ENCODE measurements at regions of chr16 and their contacts with region 1.

Region 1: GRCh38 chr16:30183233-30184095 is at the start of gene CORO1A:
- DNase-seq: peak; percentile 83 to 90
- ATAC-seq: peak; percentile 75 to 89 (median 82)
- H3K4me3 ChIP-seq: peak within 1 kb of the TSS; percentile 79
- H3K27ac ChIP-seq: peak within 1 kb of the TSS; percentile 41
- H3K4me1 ChIP-seq: peaks cover 4% of the 10 kb centered on the region
- H3K27me3 ChIP-seq: no peaks in the 10 kb centered on the region
- CTCF ChIP-seq: no peak
- total RNA-seq, gene CORO1A: 4.0 to 6.8 (median 6.3) TPM

Region 2: GRCh38 chr16:29971304-29971703 is 212.2 kb before region 1 on chr16:
- intact Hi-C with region 1: no loop called
- DNase-seq: no peak
- ATAC-seq: no peak
- H3K4me3 ChIP-seq: no peak overlapping the region
- H3K27ac ChIP-seq: no peak overlapping the region
- H3K4me1 ChIP-seq: peaks cover 20% of the 10 kb centered on the region
- H3K27me3 ChIP-seq: no peaks in the 10 kb centered on the region
- CTCF ChIP-seq: no peak

Region 3: GRCh38 chr16:30041846-30042267 is 141.6 kb before region 1 on chr16:
- intact Hi-C with region 1: loop called in 1 of 2 experiments (anchors 5 kb)
- DNase-seq: no peak
- ATAC-seq: peak in 2 of 4 donors; percentile 45 to 75
- H3K4me3 ChIP-seq: no peak overlapping the region
- H3K27ac ChIP-seq: no peak overlapping the region
- H3K4me1 ChIP-seq: no peaks in the 10 kb centered on the region
- H3K27me3 ChIP-seq: no peaks in the 10 kb centered on the region
- CTCF ChIP-seq: peak; percentile 59

Region 4: GRCh38 chr16:30122604-30123160 is 60.8 kb before region 1 on chr16:
- intact Hi-C with region 1: loop called in 1 of 2 experiments (anchors 5 kb)
- DNase-seq: peak in 1 of 2 donors; percentile 25
- ATAC-seq: peak; percentile 5 to 38 (median 9)
- H3K4me3 ChIP-seq: peak overlapping the region; percentile 86
- H3K27ac ChIP-seq: peak overlapping the region; percentile 97
- H3K4me1 ChIP-seq: peaks cover 19% of the 10 kb centered on the region
- H3K27me3 ChIP-seq: no peaks in the 10 kb centered on the region
- CTCF ChIP-seq: no peak

Region 5: GRCh38 chr16:30149250-30149930 is 34.1 kb before region 1 on chr16:
- intact Hi-C with region 1: no loop called
- DNase-seq: no peak
- ATAC-seq: no peak
- H3K4me3 ChIP-seq: no peak overlapping the region
- H3K27ac ChIP-seq: no peak overlapping the region
- H3K4me1 ChIP-seq: no peaks in the 10 kb centered on the region
- H3K27me3 ChIP-seq: no peaks in the 10 kb centered on the region
- CTCF ChIP-seq: no peak

Region 6: DNA sequence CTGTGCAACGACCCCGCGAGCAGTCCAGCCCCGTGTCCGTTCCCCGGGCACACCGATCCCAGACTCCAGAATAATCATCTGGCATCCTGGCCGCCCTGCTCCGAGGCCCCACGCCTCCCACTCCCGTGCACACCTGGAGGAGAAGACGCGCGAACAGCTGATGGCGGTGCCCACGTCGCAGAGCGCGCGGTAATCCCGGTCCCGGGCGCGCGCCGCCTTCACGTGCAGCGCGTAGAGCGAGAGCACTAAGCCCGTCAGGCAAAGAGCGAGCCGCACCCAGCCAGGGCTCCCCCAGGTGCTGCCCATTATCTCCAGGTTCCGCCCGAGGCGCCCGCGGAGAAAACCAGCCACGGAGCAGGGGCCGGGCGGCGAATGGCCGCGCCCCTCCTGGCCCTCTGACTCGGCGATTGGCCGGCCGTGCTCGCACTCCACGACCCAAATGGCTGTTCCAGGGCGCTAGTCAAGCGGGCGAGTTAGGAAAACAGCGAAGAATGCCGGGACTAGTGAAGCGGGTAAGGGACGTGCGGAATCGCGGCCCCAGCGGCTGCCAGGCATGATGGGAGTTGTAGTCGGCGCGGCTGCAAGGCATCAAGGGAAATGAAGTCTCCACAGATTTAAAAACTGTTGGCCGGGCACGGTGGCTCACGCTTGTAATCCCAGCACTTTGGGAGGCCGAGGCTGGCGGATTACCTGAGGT is 911.1 kb after region 1 on chr16 and contains the start of gene VKORC1:
- intact Hi-C with region 1: no loop called
- DNase-seq: peak; percentile 94 to 97
- ATAC-seq: peak; percentile 93 to 96 (median 94)
- H3K4me3 ChIP-seq: peak within 1 kb of the TSS; percentile 98
- H3K27ac ChIP-seq: peak within 1 kb of the TSS; percentile 94
- H3K4me1 ChIP-seq: peaks cover 4% of the 10 kb centered on the region
- H3K27me3 ChIP-seq: no peaks in the 10 kb centered on the region
- CTCF ChIP-seq: no peak
- total RNA-seq, gene VKORC1: 13.3 to 17.8 (median 16.5) TPM

Measured in psoas muscle (tissue), 8 donors.